CD8-positive, alpha-beta memory T cell (primary cell): ENCODE measurements at regions of chr15 and their contacts with region 1.

Region 1: GRCh38 chr15:68365140-68365745 is 66.7 kb downstream of the ITGA11 start:
- DNase-seq: no peak
- H3K4me3 ChIP-seq: no peak overlapping the region
- H3K4me3 Mint-ChIP-seq: no peak overlapping the region
- H3K27ac ChIP-seq: no peak overlapping the region
- H3K27ac Mint-ChIP-seq: no peak overlapping the region
- H3K4me1 ChIP-seq: no peaks in the 10 kb centered on the region
- H3K4me1 Mint-ChIP-seq: no peaks in the 10 kb centered on the region
- H3K27me3 ChIP-seq: no peaks in the 10 kb centered on the region
- H3K27me3 Mint-ChIP-seq: peaks cover 20 to 32% of the 10 kb centered on the region in 2 donors

Region 2: GRCh38 chr15:69200832-69201745 is 835.8 kb after region 1 on chr15:
- CTCF ChIA-PET with region 1: no interaction called
- POLR2A ChIA-PET with region 1: interaction called, 10 read pairs
- DNase-seq: no peak
- H3K4me3 ChIP-seq: no peak overlapping the region
- H3K4me3 Mint-ChIP-seq: no peak overlapping the region
- H3K27ac ChIP-seq: no peak overlapping the region
- H3K27ac Mint-ChIP-seq: no peak overlapping the region
- H3K4me1 ChIP-seq: no peaks in the 10 kb centered on the region
- H3K4me1 Mint-ChIP-seq: no peaks in the 10 kb centered on the region
- H3K27me3 ChIP-seq: no peaks in the 10 kb centered on the region
- H3K27me3 Mint-ChIP-seq: no peaks in the 10 kb centered on the region